Adrenal gland (tissue), 19 donors: ENCODE measurements at regions of chr3 and their contacts with region 1.

Region 1: DNA sequence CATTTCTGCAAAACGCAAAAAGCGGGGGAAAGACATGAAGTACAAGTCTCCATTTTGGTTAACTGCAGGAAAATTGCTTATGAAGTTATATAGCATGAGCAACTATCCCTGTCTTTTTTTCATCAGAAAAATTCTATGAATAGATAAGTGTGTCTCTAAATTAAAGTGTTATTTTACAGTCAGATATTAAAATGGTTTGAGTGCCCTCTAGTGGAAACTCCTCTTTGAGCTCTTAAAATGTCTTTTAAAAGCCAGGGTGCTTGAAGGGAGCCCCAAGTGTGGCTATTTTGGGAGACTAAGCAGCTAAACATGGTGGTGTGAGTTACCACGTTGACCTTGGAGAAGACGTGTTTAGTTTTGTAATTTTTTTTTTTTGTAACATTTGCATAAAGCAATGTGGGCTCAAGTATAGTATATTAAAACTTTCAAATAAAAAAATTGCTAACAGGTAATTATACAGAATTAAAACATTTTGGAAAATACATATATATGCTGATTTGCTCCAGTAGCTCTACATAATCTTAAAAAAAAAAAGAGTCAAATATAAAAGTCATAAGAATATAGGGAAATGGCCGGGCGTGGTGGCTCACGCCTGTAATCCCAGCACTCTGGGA is 77.2 kb downstream of the PPP2R3A start:
- DNase-seq: no peak
- H3K4me3 ChIP-seq: no peak overlapping the region
- H3K27ac ChIP-seq: no peak overlapping the region
- H3K4me1 ChIP-seq: no peaks in the 10 kb centered on the region
- H3K27me3 ChIP-seq: no peaks in the 10 kb centered on the region
- CTCF ChIP-seq: peak; percentile 32 to 73 (median 61)
- POLR2A ChIP-seq: no peak

Region 2: GRCh38 chr3:135918580-135918962 is 124.1 kb before region 1 on chr3:
- intact Hi-C with region 1: loop called (anchors 5 kb)
- DNase-seq: no peak
- H3K4me3 ChIP-seq: no peak overlapping the region
- H3K27ac ChIP-seq: no peak overlapping the region
- H3K4me1 ChIP-seq: peaks cover 0 to 4% of the 10 kb centered on the region in 2 donors
- H3K27me3 ChIP-seq: no peaks in the 10 kb centered on the region
- CTCF ChIP-seq: peak; percentile 34 to 73 (median 54)
- POLR2A ChIP-seq: no peak

Region 3: DNA sequence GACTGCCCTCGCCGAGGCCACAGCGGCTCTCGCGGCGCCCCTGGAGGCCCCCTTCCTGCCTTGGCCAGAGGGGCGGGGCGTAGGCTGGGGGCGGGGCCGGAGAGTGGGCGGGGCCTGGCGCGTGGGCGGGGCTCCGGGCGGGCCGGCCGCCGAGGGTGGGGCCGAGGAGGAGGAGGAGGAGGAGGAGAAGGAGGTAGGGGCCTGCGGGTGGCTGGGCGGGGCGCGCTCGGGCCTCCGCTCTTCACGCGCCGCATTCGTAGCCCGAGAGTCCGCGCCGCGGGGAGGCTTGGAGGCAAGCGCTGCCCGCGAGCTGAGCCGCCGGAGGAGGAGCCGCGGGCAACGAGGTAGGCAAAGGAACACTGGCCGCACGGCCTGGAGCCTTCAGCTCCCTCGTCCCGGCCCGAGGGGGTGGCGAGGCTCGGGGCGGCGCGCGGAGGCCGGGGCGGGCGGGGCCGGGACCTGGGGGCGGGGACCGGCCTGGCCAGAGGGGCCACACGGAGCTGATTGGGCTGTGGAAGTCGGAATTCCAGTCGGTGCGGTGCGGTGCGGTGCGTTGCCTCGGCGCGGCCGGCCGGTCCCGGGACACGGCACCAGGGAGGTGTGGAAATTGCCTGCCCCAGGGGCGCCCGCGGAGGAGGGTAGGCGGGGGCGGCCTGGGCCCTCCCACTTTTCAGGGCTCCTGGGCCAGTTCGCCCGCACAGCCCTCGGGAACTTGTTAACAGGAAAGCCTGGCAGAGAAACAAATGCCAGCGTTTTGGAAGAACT is 77.0 kb before region 1 on chr3 and contains the start of gene PPP2R3A:
- intact Hi-C with region 1: loop called in 1 of 2 experiments (anchors 10 kb)
- DNase-seq: peak; percentile 87 to 91 (median 88)
- H3K4me3 ChIP-seq: peak within 1 kb of the TSS in 3 of 4 donors; percentile 63 to 74 (median 71)
- H3K27ac ChIP-seq: peak within 1 kb of the TSS; percentile 65 to 98 (median 87)
- H3K4me1 ChIP-seq: peaks cover 4 to 18% of the 10 kb centered on the region in 2 donors
- H3K27me3 ChIP-seq: no peaks in the 10 kb centered on the region
- CTCF ChIP-seq: no peak
- POLR2A ChIP-seq: peak in 1 of 2 donors; percentile 76
- total RNA-seq, gene PPP2R3A: 8.4 to 23.1 (median 14.7) TPM